Breast epithelium (tissue), 4 donors: ENCODE measurements at regions of chr20 and their contacts with region 1.

Region 1: GRCh38 chr20:56447227-56447626 is 21.2 kb upstream of the RTF2 start:
- DNase-seq: no peak
- H3K4me3 ChIP-seq: no peak overlapping the region
- H3K27ac ChIP-seq: no peak overlapping the region
- H3K4me1 ChIP-seq: no peaks in the 10 kb centered on the region
- H3K27me3 ChIP-seq: no peaks in the 10 kb centered on the region
- CTCF ChIP-seq: no peak
- POLR2A ChIP-seq: no peak

Region 2: GRCh38 chr20:54995553-54995952 is 1451.7 kb before region 1 on chr20:
- intact Hi-C with region 1: no loop called
- DNase-seq: no peak
- H3K4me3 ChIP-seq: no peak overlapping the region
- H3K27ac ChIP-seq: no peak overlapping the region
- H3K4me1 ChIP-seq: no peaks in the 10 kb centered on the region
- H3K27me3 ChIP-seq: no peaks in the 10 kb centered on the region
- CTCF ChIP-seq: no peak
- POLR2A ChIP-seq: no peak

Region 3: DNA sequence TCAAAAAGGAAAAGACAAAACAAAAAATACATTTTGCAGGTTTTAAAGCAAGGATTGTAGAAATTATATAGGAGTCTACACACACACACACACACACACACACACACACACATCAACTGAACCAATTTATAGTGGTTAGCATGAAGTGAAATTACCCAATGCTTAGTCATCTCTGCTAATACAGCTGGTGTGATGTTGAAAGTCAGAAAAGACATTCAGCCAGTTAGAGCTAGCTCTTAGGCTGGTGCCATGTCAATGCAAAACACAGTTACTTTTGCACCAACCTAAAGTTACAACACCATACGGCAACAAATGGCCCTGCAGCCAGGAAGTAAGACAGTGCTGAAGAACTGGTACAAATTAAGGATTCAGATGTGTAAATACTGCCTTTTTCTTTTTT is 73.3 kb before region 1 on chr20:
- intact Hi-C with region 1: no loop called
- DNase-seq: no peak
- H3K4me3 ChIP-seq: no peak overlapping the region
- H3K27ac ChIP-seq: no peak overlapping the region
- H3K4me1 ChIP-seq: no peaks in the 10 kb centered on the region
- H3K27me3 ChIP-seq: no peaks in the 10 kb centered on the region
- CTCF ChIP-seq: no peak
- POLR2A ChIP-seq: no peak

Region 4: DNA sequence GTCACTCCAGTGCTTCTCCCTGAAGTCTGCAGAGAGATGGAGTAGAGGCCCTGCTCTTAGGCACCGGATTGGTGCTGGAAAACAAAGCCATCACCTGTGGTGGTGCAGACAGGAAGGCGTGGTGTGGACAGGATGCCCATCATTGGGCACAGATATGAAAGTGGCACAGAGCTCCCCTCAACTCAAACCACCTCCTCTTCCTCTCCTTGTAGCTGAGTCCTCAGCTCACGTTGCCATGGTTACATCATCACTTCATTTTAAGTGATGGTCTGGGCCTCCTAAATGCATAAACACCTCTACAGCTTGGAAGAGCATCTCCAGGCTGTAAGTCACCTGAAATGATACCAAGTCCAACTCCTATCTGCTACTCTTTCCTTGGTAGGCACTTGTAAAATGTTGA is 13.2 kb after region 1 on chr20:
- intact Hi-C with region 1: no loop called
- DNase-seq: no peak
- H3K4me3 ChIP-seq: no peak overlapping the region
- H3K27ac ChIP-seq: no peak overlapping the region
- H3K4me1 ChIP-seq: no peaks in the 10 kb centered on the region
- H3K27me3 ChIP-seq: no peaks in the 10 kb centered on the region
- CTCF ChIP-seq: no peak
- POLR2A ChIP-seq: no peak

Region 5: DNA sequence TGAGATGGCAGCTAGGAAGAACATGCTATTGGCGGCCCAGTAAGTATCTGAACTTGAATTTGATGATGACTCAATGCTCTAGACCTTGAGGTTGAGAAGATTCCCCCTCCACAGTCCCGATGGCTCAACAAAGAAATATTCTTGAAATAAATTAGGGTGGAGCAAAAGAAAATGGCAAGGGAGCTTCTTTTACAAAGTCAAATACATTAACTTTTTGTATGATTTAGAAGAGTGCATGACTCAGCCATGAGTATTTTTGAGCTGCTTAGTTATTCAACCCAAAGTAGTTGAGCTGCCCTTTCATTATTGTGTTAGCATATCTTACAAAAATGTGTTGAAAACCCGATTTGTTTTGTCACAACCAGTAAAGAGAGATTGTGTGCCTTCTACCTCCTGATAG is 189.5 kb after region 1 on chr20:
- intact Hi-C with region 1: no loop called
- DNase-seq: no peak
- H3K4me3 ChIP-seq: peak overlapping the region in 2 of 3 donors; percentile 39 to 75
- H3K27ac ChIP-seq: peak overlapping the region; percentile 74 to 80
- H3K4me1 ChIP-seq: no peaks in the 10 kb centered on the region
- H3K27me3 ChIP-seq: no peaks in the 10 kb centered on the region
- CTCF ChIP-seq: no peak
- POLR2A ChIP-seq: no peak

Region 6: DNA sequence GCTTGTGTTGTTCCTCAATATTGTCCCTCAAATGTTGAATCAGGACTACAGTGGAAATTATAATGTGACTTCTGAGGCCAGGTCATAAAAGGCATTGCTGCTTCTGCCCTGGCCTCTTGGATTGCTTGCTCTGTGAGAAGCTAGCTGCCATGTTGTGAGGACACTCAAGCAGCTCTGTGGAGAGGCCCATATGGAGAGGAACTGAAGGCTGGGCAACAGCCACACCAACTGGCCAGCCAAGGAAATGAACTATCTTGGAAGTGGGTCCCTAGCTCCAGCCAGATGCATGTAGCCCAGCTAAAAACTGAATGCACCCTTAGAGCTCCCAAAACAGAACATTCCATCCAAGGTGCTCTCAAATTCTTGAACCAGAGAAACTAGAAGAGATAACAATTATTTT is 536.6 kb after region 1 on chr20:
- intact Hi-C with region 1: loop called (anchors 5 kb)
- DNase-seq: no peak
- H3K4me3 ChIP-seq: no peak overlapping the region
- H3K27ac ChIP-seq: no peak overlapping the region
- H3K4me1 ChIP-seq: no peaks in the 10 kb centered on the region
- H3K27me3 ChIP-seq: peaks cover 0 to 5% of the 10 kb centered on the region in 2 donors
- CTCF ChIP-seq: no peak
- POLR2A ChIP-seq: no peak